Head of caudate nucleus (tissue), 42 donors: ENCODE measurements at regions of chr7 and their contacts with region 1.

Region 1: GRCh38 chr7:2844165-2844898 is at the start of gene GNA12:
- DNase-seq: peak; percentile 96 to 100 (median 99)

Region 2: GRCh38 chr7:2720582-2721491 is 123.5 kb before region 1 on chr7:
- intact Hi-C with region 1: loop called (anchors 10 kb)
- DNase-seq: no peak

Region 3: DNA sequence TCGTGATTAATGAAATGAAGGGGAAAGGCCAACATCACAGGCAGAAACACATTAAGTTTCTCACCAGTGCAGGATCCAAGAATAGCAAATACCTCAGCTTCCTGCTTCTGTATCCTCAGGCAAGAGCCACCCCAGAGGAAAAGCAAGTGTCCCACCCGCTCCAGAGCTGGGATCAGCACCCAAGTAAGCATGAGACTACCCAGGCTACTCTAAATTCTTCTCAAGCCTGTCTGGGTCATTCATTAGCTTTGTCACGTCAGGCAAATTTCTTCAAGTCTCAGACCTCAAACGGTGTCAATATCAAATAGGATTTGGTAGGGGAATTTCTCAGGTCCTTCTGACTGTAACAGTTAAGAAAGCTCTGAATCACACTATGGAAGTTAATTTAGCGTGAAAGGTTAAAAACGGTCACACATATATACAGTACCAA is 59.2 kb before region 1 on chr7:
- intact Hi-C with region 1: no loop called
- DNase-seq: peak in 1 of 42 donors; percentile 2

Region 4: GRCh38 chr7:2863461-2864066 is 19.2 kb after region 1 on chr7:
- intact Hi-C with region 1: loop called (anchors 2 kb)
- DNase-seq: peak in 19 of 42 donors; percentile 14 to 78 (median 43)